ENCODE measurements at regions of chr4 and their contacts with region 1.

Region 1: DNA sequence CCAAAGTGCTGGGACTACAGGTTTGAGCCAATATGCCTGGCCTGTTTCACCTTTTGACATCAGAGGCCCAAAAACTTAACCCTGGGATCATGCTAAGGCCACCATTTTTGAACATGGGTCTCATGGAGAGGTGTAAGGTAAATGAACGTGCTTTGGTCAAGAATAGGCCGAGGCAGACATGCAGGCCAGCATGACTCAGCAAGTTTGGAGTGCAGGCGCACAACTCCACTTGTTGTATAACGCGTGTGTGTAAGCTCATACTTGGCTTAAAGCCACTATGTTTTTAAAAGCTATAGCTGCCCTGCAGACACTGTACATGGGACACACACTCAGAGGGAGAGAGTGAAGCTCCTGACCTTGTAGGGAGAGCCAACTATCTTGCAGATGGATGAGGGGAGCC is 43.8 kb upstream of the HPSE start:
- DNase-seq: no peak
- H3K4me3 ChIP-seq: no peak overlapping the region
- H3K27ac ChIP-seq: no peak overlapping the region
- H3K4me1 ChIP-seq: no peaks in the 10 kb centered on the region
- H3K27me3 ChIP-seq: no peaks in the 10 kb centered on the region
- CTCF ChIP-seq: no peak
- POLR2A ChIP-seq: no peak

Region 2: DNA sequence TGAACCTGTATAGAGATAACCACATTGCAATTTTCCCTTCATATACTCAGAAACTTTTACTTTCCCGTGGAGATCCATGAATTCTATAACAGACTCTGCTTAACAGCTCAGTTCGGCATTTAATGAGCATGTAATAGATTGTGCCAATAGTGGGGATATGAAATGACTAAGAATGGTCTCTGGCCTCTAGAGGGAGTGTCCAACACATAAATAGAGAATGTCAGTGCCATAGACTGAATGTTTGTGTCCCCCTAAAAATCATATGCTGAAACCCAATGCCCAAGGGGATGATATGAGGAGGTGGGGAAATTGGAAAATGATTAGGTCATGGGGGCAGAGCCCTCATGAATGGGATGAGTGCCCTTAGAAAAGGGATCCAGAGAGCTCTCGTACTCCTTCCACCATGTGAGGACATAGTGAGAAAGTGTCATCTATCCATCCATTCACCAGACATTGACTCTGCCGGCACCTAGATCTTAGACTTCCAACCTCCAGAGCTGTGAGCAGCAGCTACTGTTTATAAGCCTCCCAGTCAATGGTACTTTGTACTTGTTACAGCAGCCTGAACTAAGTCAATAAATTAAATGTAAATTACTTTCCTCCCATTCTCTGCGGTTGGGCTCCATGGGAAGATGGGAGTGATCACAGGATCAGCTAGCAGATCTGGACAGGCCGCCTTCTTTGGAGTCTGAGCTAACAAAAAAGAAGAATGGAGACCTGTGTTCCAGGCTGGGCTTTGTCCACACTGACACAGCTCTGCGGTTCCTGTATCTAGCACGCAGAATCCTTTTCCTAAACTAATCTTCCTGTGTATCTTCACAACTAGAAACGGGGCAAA is 15.7 kb before region 1 on chr4:
- CTCF ChIA-PET with region 1: interaction called, 14 read pairs
- POLR2A ChIA-PET with region 1: no interaction called
- dilution Hi-C with region 1: no loop called
- intact Hi-C with region 1: no loop called
- DNase-seq: peak; percentile 61
- H3K4me3 ChIP-seq: no peak overlapping the region
- H3K27ac ChIP-seq: no peak overlapping the region
- H3K4me1 ChIP-seq: peaks cover 13% of the 10 kb centered on the region
- H3K27me3 ChIP-seq: no peaks in the 10 kb centered on the region
- CTCF ChIP-seq: peak; percentile 35 to 44
- POLR2A ChIP-seq: no peak